IMR-90 (cell line): ENCODE measurements at regions of chr7 and their contacts with region 1.

Region 1: DNA sequence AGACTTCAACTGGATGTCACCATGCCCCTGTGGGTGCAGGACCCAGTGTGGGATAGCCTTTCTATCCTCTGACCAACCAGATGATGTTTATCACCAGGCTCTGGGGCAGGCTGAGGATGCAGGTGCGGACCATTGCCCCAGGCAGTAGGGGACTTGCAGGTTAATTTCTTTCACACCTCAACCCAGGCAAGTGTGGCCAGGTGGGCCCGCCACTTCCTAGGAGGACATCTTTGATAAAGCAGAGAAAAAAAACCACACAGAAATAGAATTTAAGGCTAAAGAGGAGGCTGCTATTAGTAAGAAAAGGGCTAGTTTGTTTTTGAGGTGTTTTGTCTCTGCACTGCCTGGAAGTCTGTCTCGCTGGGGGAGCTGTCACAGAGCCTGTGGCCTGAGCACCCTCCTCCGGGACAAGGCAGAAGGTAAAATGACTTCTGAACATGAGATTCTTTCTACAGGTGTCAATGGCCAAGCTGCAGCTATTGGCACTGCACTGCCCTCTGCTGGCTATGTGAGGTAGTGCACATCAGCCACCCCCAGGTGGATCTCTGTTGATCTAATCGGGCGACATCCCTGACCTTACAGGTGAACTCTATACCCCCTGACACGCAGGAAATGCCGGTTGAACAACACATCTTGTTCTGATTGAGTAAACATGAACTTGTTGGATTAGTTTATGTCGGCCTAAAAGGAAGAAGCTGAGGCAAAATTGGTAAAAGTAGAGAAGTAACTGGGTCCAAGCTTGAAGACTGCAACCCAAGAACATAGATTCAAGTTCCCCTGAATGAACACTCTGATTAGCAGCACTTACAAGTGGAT is 21.0 kb downstream of the UPP1 start:
- DNase-seq: peak; percentile 26
- ATAC-seq: peak; percentile 78
- H3K4me3 ChIP-seq: no peak overlapping the region
- H3K27ac ChIP-seq: no peak overlapping the region
- H3K4me1 ChIP-seq: peaks cover 6% of the 10 kb centered on the region
- H3K27me3 ChIP-seq: no peaks in the 10 kb centered on the region
- CTCF ChIP-seq: peak; percentile 90
- POLR2A ChIP-seq: 0 out of 2 replicates have a peak, but pooled peaks have one; percentile 3
- RAD21 ChIP-seq: peak; percentile 94

Region 2: GRCh38 chr7:47266131-47266706 is 843.8 kb before region 1 on chr7:
- CTCF ChIA-PET with region 1: no interaction called
- POLR2A ChIA-PET with region 1: no interaction called
- dilution Hi-C with region 1: no loop called
- in situ Hi-C with region 1: loop called (anchors 25 kb)
- intact Hi-C with region 1: loop called (anchors 5 kb)
- DNase-seq: peak; percentile 68
- ATAC-seq: peak; percentile 97
- H3K4me3 ChIP-seq: no peak overlapping the region
- H3K27ac ChIP-seq: no peak overlapping the region
- H3K4me1 ChIP-seq: peaks cover 5% of the 10 kb centered on the region; the same call in 1 of the 2 replicates
- H3K27me3 ChIP-seq: no peaks in the 10 kb centered on the region
- CTCF ChIP-seq: peak; percentile 91
- POLR2A ChIP-seq: 0 out of 2 replicates have a peak, but pooled peaks have one; percentile 35
- RAD21 ChIP-seq: peak; percentile 94

Region 3: DNA sequence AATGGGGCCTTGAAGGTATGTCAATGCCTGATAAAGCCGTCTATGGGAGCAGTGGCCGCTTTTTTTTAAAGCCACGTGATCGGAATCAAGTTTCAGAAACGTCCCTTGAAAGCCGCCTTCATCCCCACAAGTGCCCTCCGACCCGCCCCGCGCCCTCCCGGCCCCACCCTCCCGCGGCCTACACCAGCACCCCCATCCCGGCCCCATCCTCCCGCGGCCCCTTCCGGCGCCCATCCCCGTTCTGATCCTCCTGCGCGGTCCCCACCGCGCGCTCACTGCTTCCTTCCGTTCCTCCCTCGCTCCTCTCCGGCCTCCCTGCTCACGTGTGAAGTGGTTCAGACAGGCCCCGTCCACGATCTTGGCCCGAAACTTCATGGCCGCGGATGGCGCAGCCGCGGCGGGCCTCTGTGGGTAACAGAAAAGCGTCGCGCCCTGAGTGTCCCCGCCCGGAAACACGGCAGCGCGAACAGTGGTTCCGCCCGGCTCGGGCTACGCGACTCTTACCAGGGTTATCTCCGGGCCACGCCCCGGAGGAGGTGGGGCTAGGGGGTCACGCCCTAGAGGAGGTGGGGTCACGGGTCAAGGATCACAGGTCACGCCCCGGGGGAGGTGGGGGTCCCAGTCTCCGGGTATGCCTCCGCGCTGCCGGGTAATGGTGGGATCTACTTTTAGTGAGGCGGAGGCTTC is 130.8 kb before region 1 on chr7 and contains the start of gene HUS1:
- CTCF ChIA-PET with region 1: interaction called, 3 read pairs
- POLR2A ChIA-PET with region 1: no interaction called
- dilution Hi-C with region 1: loop called (anchors 25 kb)
- in situ Hi-C with region 1: no loop called
- intact Hi-C with region 1: no loop called
- DNase-seq: peak; percentile 81
- ATAC-seq: peak; percentile 100
- H3K4me3 ChIP-seq: peak within 1 kb of the TSS; percentile 84
- H3K27ac ChIP-seq: peak within 1 kb of the TSS; percentile 95
- H3K4me1 ChIP-seq: peaks cover 3% of the 10 kb centered on the region
- H3K27me3 ChIP-seq: peaks cover 2% of the 10 kb centered on the region; the same call in 1 of the 2 replicates
- CTCF ChIP-seq: no peak
- POLR2A ChIP-seq: peak; percentile 90
- RAD21 ChIP-seq: no peak
- total RNA-seq, gene HUS1: 18.3 and 31.9 TPM in 2 replicates

Region 4: DNA sequence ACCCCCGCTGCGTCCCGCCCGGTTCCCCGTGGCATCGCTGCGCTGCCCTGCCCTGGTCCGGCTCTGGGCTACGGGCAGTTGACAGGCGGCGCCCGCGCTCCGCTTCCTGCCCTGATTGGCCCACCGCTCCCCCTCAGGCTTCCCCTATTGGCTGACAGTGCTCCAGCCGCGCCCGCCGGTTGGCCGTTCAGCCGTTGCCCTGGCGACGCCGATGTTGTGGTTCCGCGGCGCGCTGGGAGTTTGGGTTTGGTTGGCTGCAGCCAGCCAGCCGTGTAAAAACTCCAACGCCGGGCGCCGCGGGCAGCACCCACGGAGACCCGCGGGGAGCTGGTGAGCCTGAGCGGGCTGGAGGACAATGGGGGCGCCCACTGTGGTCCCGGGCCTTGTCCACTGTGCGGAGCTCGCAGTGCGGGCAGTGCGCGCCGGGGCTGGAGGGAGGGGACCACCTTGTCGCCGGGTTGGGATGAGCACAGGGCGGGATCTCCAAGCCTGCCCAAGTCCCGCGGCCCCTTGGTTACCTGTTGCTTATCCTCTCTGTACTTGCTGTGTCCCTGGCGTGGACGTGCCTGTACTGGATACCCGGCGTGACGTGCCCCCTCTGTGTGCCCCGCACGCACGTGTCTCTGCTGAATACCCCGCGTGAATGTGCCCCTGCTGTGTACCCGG is 74.6 kb before region 1 on chr7 and contains the start of gene C7orf57:
- CTCF ChIA-PET with region 1: interaction called, 4 read pairs
- POLR2A ChIA-PET with region 1: no interaction called
- dilution Hi-C with region 1: no loop called
- in situ Hi-C with region 1: no loop called
- intact Hi-C with region 1: loop called (anchors 5 kb)
- DNase-seq: peak; percentile 77
- ATAC-seq: peak; percentile 100
- H3K4me3 ChIP-seq: peak within 1 kb of the TSS; percentile 33
- H3K27ac ChIP-seq: no peak within 1 kb of the TSS
- H3K4me1 ChIP-seq: no peaks in the 10 kb centered on the region
- H3K27me3 ChIP-seq: peaks cover 18% of the 10 kb centered on the region
- CTCF ChIP-seq: peak; percentile 27; the same call in 1 of the 2 replicates
- POLR2A ChIP-seq: no peak
- RAD21 ChIP-seq: no peak
- total RNA-seq, gene C7orf57: not detected in 2 replicates